ENCODE measurements at regions of chr1 and their contacts with region 1.

Region 1: GRCh38 chr1:211698161-211699026 is 23.0 kb upstream of the NEK2 start:
- DNase-seq: peak; percentile 86
- CTCF ChIP-seq: peak; percentile 99

Region 2: GRCh38 chr1:211632631-211633523 is 65.5 kb before region 1 on chr1:
- CTCF ChIA-PET with region 1: no interaction called
- POLR2A ChIA-PET with region 1: no interaction called
- DNase-seq: no peak
- CTCF ChIP-seq: no peak

Region 3: DNA sequence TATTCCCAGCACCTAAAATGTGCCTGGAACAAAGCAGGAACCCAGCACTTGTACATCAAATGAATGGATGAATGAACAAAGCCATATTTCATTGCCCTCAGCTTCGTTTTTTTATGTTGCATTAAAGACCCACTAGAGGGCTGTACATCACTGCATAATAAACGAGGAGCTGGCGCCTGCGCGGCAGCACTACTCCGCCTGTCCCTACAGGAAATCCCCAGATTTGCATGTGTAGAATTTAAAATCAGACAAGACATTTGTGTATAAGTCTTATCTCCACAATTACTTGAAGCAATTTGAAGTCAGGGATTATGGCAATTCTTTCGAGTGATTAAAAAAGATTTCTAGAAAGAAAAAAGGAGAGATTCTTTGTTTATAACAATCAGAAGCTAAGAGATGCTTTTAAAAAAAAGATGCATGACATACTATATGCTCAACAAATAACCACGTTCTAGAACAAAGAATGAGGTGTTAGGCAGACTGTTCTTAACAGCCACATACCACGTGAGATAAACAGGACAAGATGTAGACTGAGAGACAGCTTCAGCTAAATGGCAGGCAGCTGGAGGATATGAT is 17.6 kb before region 1 on chr1:
- CTCF ChIA-PET with region 1: interaction called, 114 read pairs
- POLR2A ChIA-PET with region 1: no interaction called
- DNase-seq: peak; percentile 79
- CTCF ChIP-seq: peak; percentile 64

Region 4: GRCh38 chr1:211741116-211741515 is 42.7 kb after region 1 on chr1:
- CTCF ChIA-PET with region 1: interaction called, 16 read pairs
- POLR2A ChIA-PET with region 1: no interaction called
- DNase-seq: no peak
- CTCF ChIP-seq: no peak

Region 5: DNA sequence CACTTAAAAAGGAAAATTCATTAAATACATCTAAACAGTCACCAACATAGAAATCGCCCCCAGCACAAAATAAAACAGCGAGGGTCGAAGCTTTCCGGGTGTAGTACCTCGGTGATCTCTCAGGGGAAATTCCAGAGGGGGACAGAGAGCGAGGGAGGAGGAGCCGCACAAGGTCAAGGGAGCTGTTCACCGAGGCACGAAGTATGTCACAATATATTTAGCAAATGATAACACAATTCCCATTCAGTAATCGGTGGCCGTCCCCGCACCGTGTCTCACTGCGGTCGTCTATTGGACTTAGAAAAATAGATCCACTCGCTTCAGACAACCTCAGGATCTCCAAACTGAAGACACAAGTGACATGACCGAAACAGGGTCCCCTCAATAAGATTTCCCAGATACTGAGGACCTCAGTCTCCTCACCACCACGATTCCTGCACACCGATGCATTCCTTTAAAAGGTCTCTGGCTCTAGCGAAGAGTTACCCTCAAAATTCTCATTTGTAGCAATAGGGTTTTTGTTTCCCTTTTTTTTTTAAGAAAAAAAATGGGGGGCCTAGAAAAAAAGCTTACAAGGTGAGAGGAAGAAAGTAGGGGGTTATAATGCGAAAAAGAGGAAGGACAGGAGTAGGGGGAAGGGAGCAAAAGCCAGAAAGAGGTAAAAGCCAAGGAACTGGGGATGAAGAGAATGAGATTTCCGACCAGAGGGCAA is 131.1 kb after region 1 on chr1:
- CTCF ChIA-PET with region 1: interaction called, 13 read pairs
- POLR2A ChIA-PET with region 1: no interaction called
- DNase-seq: no peak
- CTCF ChIP-seq: no peak

Region 6: GRCh38 chr1:211985556-211986264 is 287.3 kb after region 1 on chr1:
- CTCF ChIA-PET with region 1: interaction called, 12 read pairs
- POLR2A ChIA-PET with region 1: no interaction called
- DNase-seq: peak; percentile 64
- CTCF ChIP-seq: no peak

Region 7: GRCh38 chr1:212040629-212041028 is 342.2 kb after region 1 on chr1:
- CTCF ChIA-PET with region 1: interaction called, 64 read pairs
- POLR2A ChIA-PET with region 1: interaction called, 5 read pairs
- DNase-seq: no peak
- CTCF ChIP-seq: no peak